ENCODE measurements at regions of chr3 and their contacts with region 1.

Region 1: GRCh38 chr3:64462203-64462602 is 225.6 kb downstream of the ADAMTS9 start:
- DNase-seq: no peak

Region 2: DNA sequence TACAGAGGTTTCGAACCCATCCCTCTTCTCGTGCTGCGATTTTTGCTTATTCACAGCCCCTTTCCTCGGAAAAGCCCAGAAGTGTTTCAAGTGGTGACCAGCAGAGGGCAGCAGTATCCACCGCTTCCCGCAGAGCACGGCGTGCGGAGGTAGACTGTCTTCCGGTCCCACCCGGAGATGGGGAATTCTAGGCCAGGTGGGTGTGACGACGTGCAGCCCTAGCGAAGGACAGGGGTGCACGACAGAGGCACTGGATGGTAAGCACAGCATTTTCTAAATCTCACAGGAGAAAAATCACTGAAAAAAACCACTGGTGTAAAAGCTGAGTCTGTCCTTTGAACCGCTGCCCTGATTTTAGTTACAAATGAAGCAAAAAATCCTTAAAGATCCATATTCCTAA is 431.5 kb before region 1 on chr3:
- in situ Hi-C with region 1: loop called (anchors 25 kb)
- DNase-seq: peak; percentile 67